ENCODE measurements at regions of chr13 and their contacts with region 1.

Region 1: DNA sequence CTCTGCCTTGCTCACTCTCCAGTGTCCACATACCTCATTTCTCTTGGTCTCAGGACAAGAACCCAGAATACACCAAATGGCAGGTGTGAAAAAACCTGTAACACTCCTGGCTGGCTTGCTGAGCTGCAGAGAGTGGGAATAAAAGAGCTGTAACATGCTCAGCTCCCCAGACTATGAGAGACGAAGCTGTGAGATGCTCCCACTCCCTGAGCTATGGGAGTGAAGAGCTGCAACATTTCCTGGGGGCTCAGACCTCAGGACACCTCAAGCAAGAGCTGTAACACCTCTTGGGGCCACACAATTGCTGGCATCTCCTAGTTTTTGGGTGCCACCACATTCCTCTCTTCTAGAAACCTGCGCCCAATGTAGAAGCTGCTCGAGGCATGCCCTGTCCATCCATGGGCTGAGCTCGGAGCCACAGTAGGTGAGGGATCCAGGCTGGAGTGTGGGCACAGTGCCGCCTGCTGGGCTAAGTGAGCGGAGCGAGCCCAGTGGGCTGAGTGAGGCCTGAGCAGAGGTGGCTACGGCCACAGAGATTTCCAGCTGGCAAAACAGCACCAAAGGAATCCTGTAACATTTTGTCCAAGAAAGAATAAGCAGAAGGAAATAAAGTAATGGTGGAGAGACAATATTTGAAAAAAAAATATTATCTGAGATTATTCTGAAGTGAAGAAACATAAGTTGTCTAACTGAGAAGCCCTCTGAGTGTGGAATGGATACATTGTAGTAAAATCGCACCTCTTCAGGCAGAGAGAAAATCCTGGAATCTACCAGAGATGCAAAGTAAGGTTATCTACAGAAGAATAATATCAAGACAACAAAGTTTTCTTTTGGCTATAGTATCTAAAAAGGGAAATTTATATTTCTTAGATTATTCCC is 186.2 kb upstream of the PCDH9 start:
- DNase-seq: peak; percentile 45
- ATAC-seq: peak; percentile 95
- H3K4me3 ChIP-seq: no peak overlapping the region
- H3K27ac ChIP-seq: no peak overlapping the region
- H3K4me1 ChIP-seq: no peaks in the 10 kb centered on the region
- H3K27me3 ChIP-seq: no peaks in the 10 kb centered on the region
- CTCF ChIP-seq: peak; percentile 72

Region 2: GRCh38 chr13:67230404-67231288 is 185.6 kb before region 1 on chr13:
- CTCF ChIA-PET with region 1: no interaction called
- POLR2A ChIA-PET with region 1: no interaction called
- intact Hi-C with region 1: loop called (anchors 10 kb)
- DNase-seq: peak; percentile 89
- ATAC-seq: peak; percentile 83
- H3K4me3 ChIP-seq: peak overlapping the region; percentile 88
- H3K27ac ChIP-seq: no peak overlapping the region; the same call in 1 of the 2 replicates
- H3K4me1 ChIP-seq: 0 out of 2 replicates have a peak, but pooled peaks cover 3% of the 10 kb centered on the region
- H3K27me3 ChIP-seq: no peaks in the 10 kb centered on the region
- CTCF ChIP-seq: no peak

Region 3: GRCh38 chr13:67308004-67308772 is 108.1 kb before region 1 on chr13:
- CTCF ChIA-PET with region 1: no interaction called
- POLR2A ChIA-PET with region 1: no interaction called
- intact Hi-C with region 1: no loop called
- DNase-seq: peak; percentile 79
- ATAC-seq: peak; percentile 80
- H3K4me3 ChIP-seq: no peak overlapping the region
- H3K27ac ChIP-seq: peak overlapping the region; percentile 27; the same call in 1 of the 2 replicates
- H3K4me1 ChIP-seq: peaks cover 23% of the 10 kb centered on the region
- H3K27me3 ChIP-seq: no peaks in the 10 kb centered on the region
- CTCF ChIP-seq: no peak

Region 4: GRCh38 chr13:67598822-67599221 is 182.5 kb after region 1 on chr13:
- CTCF ChIA-PET with region 1: no interaction called
- POLR2A ChIA-PET with region 1: no interaction called
- intact Hi-C with region 1: no loop called
- DNase-seq: no peak
- ATAC-seq: no peak
- H3K4me3 ChIP-seq: no peak overlapping the region
- H3K27ac ChIP-seq: no peak overlapping the region
- H3K4me1 ChIP-seq: no peaks in the 10 kb centered on the region
- H3K27me3 ChIP-seq: no peaks in the 10 kb centered on the region
- CTCF ChIP-seq: no peak

Measured in PC-3 (cell line).